MCF 10A (cell line): ENCODE measurements at regions of chr20 and their contacts with region 1.

Region 1: GRCh38 chr20:3820048-3820900 is at the start of gene AP5S1:
- DNase-seq: peak; percentile 96
- H3K4me3 Mint-ChIP-seq: peak within 1 kb of the TSS; percentile 93
- H3K27ac Mint-ChIP-seq: peak within 1 kb of the TSS; percentile 96
- H3K4me1 Mint-ChIP-seq: peaks cover 19% of the 10 kb centered on the region
- H3K27me3 Mint-ChIP-seq: no peaks in the 10 kb centered on the region
- CTCF ChIP-seq: peak; percentile 97
- total RNA-seq, gene AP5S1: 15.8 and 19.2 TPM in 2 replicates

Region 2: DNA sequence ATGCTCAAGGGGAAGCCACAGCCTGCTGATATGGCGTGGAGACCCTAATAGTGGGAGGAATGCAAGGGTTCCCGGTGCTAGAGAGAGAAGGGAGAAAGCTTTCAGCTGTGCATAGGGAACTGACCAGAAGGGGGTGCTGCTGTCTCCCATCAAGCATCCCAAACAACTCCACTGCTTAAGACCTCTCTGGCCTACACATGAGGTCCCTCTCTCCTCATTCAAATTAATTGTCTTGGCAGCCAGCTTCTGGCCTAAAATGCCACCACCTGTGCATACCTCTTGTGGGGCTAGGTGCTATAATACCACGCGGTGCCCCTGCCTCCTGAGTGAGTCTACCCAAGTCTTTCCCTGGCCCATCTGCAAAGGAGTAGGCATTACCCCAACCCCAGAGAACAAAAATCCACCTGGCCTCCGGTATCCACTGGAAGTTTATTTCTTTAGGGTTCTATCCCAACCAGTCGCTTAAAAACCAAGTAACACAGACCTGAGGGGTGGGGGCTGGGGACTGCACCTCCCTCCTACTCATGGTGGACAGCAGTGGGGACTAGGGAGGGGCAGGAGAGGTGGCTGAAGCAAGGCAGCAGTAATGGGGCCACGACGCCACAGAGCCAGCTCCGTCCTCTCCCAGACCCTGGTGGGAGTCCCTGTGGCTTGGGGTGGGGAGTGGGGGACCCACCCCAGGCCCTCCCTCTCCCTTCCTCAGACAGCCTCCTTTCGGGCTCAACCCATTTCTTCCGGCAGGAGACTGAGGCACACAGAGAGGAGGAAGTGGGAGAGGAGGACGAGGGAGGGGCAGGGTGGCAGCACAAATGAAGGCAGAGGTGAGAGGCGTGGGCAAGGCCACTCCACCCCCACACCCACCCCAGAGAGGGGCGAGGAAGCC is 66.9 kb before region 1 on chr20:
- CTCF ChIA-PET with region 1: interaction called, 5 read pairs
- POLR2A ChIA-PET with region 1: no interaction called
- intact Hi-C with region 1: loop called (anchors 1 kb)
- DNase-seq: peak; percentile 72
- H3K4me3 Mint-ChIP-seq: no peak overlapping the region
- H3K27ac Mint-ChIP-seq: no peak overlapping the region
- H3K4me1 Mint-ChIP-seq: no peaks in the 10 kb centered on the region
- H3K27me3 Mint-ChIP-seq: no peaks in the 10 kb centered on the region
- CTCF ChIP-seq: peak; percentile 78

Region 3: GRCh38 chr20:3781153-3781910 is 38.9 kb before region 1 on chr20 and contains the start of gene SPEF1:
- CTCF ChIA-PET with region 1: interaction called, 231 read pairs
- POLR2A ChIA-PET with region 1: interaction called, 15 read pairs
- intact Hi-C with region 1: loop called (anchors 1 kb)
- DNase-seq: peak; percentile 95
- H3K4me3 Mint-ChIP-seq: peak within 1 kb of the TSS; percentile 73
- H3K27ac Mint-ChIP-seq: peak within 1 kb of the TSS; percentile 87
- H3K4me1 Mint-ChIP-seq: peaks cover 34% of the 10 kb centered on the region
- H3K27me3 Mint-ChIP-seq: no peaks in the 10 kb centered on the region
- CTCF ChIP-seq: peak; percentile 26
- total RNA-seq, gene SPEF1: 0.32 TPM in 1 of 2 replicates, not detected in the other

Region 4: DNA sequence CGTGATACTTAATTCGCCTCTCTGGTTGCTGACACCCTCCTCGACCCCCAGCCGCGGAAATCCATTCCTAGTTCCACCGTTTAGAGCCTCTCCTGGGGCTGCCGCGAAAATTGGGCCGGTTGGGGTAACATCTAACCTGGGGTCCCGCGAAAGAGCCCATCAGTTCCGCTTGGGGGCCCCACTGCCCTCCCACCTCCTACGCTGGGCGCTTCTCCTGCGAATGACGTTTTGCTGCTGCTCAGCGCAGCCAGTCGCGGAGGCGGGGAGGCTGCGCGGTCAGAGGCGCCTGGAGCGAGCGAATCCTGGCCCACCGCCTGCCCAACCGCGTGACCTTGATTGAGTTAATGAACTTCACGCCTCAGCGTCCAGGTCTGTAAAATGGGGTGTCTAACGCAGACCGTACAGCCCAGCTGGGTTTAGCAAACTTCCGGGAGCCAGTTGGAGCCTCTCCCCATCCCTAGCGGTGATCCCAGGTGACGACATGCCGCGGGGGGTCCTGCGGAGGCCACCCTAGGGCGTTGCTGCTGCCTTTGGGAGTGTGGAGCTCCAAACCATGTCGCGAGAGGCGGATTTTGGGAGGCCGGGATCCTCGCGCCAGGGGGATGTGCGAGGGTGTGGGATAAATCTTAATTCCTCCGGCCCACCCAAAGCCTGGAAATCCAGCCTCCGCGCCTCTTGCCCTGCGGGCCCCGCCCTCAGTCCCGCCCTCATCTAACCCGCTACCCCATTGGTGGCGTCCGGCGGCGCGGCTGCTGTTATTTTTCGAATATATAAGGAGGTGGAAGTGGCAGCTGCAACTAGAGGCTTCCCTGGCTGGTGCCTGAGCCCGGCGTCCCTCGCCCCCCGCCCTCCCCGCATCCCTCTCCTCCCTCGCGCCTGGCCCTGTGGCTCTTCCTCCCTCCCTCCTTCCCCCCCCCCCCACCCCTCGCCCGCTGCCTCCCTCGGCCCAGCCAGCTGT is 24.5 kb before region 1 on chr20 and contains the start of gene CDC25B:
- CTCF ChIA-PET with region 1: interaction called, 231 read pairs
- POLR2A ChIA-PET with region 1: interaction called, 36 read pairs
- intact Hi-C with region 1: loop called (anchors 1 kb)
- DNase-seq: peak; percentile 95
- H3K4me3 Mint-ChIP-seq: peak within 1 kb of the TSS; percentile 97
- H3K27ac Mint-ChIP-seq: peak within 1 kb of the TSS; percentile 94
- H3K4me1 Mint-ChIP-seq: peaks cover 25% of the 10 kb centered on the region
- H3K27me3 Mint-ChIP-seq: no peaks in the 10 kb centered on the region
- CTCF ChIP-seq: peak; percentile 45
- total RNA-seq, gene CDC25B: 134 and 137 TPM in 2 replicates

Region 5: DNA sequence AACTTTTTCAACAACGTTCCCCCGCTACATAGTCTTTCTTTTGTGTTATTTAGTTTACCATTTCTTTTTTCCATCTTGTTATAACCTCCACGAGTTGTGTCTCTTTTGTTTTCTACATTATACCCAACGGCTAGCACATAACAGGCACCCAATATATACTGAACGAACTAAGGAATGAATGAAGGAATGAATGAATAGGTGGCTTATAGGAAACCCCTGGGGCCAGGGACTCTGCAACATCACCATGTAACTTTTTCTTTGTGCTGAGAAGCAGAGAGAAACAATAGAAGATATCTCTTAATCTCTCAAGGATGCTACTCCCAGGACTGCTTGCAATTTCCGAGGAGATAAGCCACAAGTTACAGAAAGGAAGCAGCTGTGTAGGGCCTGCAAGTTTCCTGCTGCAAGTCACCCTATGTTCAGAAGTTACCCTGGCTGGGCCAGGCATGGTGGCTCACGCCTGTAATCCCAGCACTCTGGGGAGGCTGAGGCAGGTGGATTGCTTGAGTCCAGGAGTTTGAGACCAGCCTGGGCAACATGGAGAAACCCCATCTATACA is 19.0 kb after region 1 on chr20:
- CTCF ChIA-PET with region 1: interaction called, 30 read pairs
- POLR2A ChIA-PET with region 1: interaction called, 64 read pairs
- intact Hi-C with region 1: no loop called
- DNase-seq: no peak
- H3K4me3 Mint-ChIP-seq: no peak overlapping the region
- H3K27ac Mint-ChIP-seq: no peak overlapping the region
- H3K4me1 Mint-ChIP-seq: no peaks in the 10 kb centered on the region
- H3K27me3 Mint-ChIP-seq: no peaks in the 10 kb centered on the region
- CTCF ChIP-seq: no peak

Region 6: GRCh38 chr20:3854462-3854871 is 34.2 kb after region 1 on chr20:
- CTCF ChIA-PET with region 1: interaction called, 36 read pairs
- POLR2A ChIA-PET with region 1: interaction called, 15 read pairs
- intact Hi-C with region 1: loop called (anchors 2 kb)
- DNase-seq: no peak
- H3K4me3 Mint-ChIP-seq: no peak overlapping the region
- H3K27ac Mint-ChIP-seq: no peak overlapping the region
- H3K4me1 Mint-ChIP-seq: peaks cover 9% of the 10 kb centered on the region
- H3K27me3 Mint-ChIP-seq: no peaks in the 10 kb centered on the region
- CTCF ChIP-seq: no peak